ENCODE measurements at regions of chr1 and their contacts with region 1.

Region 1: GRCh38 chr1:101520302-101520701 is 283.5 kb downstream of the S1PR1 start:
- DNase-seq: peak in 2 of 3 donors; percentile 20 to 29
- ATAC-seq: peak; percentile 77
- H3K4me3 ChIP-seq: no peak overlapping the region
- H3K4me1 ChIP-seq: peaks cover 6% of the 10 kb centered on the region
- CTCF ChIP-seq: no peak

Region 2: DNA sequence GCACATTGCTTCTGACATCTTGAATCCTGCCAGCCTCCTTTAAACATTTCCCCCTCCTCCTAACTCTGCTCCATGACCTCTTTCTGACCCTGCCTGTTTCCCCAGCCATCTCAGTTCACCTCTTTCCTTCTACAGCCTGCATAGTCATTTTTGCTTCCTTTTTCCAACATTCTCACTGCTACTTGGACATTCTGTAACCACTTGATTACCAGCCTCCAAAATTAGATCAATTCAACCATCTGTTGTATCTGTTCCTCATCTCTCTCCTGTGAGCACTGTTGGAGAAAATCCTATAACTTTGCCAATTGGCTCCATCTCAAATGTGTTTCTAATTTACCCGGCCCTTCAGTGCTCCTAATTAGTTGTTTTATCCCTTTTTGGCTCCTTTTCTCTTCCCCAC is 1009.9 kb before region 1 on chr1:
- intact Hi-C with region 1: no loop called
- DNase-seq: no peak
- ATAC-seq: no peak
- H3K4me3 ChIP-seq: no peak overlapping the region
- H3K4me1 ChIP-seq: no peaks in the 10 kb centered on the region
- CTCF ChIP-seq: no peak

Region 3: DNA sequence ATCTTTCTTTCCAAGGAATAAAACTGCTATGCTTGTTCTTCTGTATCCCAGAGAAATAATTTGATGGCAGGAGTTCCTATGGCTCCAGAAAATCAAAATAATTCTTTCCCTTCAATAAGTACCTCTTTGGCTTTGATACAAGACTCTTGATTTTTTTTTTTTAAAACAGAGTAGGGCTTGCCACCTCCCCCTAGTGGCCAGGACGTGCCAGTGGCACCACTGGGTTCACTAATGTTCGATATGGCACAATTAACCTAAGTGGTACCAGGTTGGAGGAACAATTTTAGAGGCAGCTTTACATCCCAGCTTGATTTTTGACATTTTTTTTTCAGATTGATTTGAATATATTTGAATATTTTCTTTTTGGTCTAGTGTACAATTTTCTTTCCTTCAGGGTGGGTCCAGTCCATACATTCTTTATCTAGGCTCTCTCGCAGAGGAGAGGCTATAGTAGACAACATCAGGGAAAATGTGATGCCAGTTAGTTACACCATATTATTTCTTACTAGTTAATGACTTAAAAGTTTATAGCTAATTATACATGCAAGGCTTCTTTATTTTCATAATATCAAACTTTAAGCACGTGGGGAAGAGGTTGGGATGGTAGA is 47.4 kb after region 1 on chr1:
- intact Hi-C with region 1: loop called in 1 of 2 experiments (anchors 5 kb)
- DNase-seq: peak; percentile 42 to 62 (median 53)
- ATAC-seq: peak; percentile 88
- H3K4me3 ChIP-seq: no peak overlapping the region
- H3K4me1 ChIP-seq: no peaks in the 10 kb centered on the region
- CTCF ChIP-seq: peak; percentile 76